CD4-positive, alpha-beta memory T cell (primary cell): ENCODE measurements at regions of chr20 and their contacts with region 1.

Region 1: GRCh38 chr20:57351042-57351783 is at the start of gene RAE1:
- DNase-seq: peak; percentile 90 to 92 (median 91)
- H3K4me3 ChIP-seq: peak within 1 kb of the TSS; percentile 84 to 92
- H3K4me3 Mint-ChIP-seq: peak within 1 kb of the TSS; percentile 87 to 96 (median 92)
- H3K27ac ChIP-seq: peak within 1 kb of the TSS; percentile 91
- H3K27ac Mint-ChIP-seq: peak within 1 kb of the TSS; percentile 87 to 95 (median 91)
- H3K4me1 ChIP-seq: peaks cover 23% of the 10 kb centered on the region
- H3K4me1 Mint-ChIP-seq: peaks cover 11 to 36% (median 23%) of the 10 kb centered on the region in 4 donors
- H3K27me3 ChIP-seq: no peaks in the 10 kb centered on the region
- H3K27me3 Mint-ChIP-seq: peaks cover 0 to 3% of the 10 kb centered on the region in 2 donors
- total RNA-seq, gene RAE1: 30.9 to 33.8 TPM

Region 2: GRCh38 chr20:56551571-56551970 is 799.6 kb before region 1 on chr20:
- CTCF ChIA-PET with region 1: interaction called, 19 read pairs
- POLR2A ChIA-PET with region 1: no interaction called
- intact Hi-C with region 1: no loop called
- DNase-seq: no peak
- H3K4me3 ChIP-seq: no peak overlapping the region
- H3K4me3 Mint-ChIP-seq: no peak overlapping the region
- H3K27ac ChIP-seq: no peak overlapping the region
- H3K27ac Mint-ChIP-seq: peak overlapping the region in 1 of 7 donors; percentile 53
- H3K4me1 ChIP-seq: no peaks in the 10 kb centered on the region
- H3K4me1 Mint-ChIP-seq: no peaks in the 10 kb centered on the region
- H3K27me3 ChIP-seq: no peaks in the 10 kb centered on the region
- H3K27me3 Mint-ChIP-seq: peaks cover 0 to 1% of the 10 kb centered on the region in 2 donors

Region 3: DNA sequence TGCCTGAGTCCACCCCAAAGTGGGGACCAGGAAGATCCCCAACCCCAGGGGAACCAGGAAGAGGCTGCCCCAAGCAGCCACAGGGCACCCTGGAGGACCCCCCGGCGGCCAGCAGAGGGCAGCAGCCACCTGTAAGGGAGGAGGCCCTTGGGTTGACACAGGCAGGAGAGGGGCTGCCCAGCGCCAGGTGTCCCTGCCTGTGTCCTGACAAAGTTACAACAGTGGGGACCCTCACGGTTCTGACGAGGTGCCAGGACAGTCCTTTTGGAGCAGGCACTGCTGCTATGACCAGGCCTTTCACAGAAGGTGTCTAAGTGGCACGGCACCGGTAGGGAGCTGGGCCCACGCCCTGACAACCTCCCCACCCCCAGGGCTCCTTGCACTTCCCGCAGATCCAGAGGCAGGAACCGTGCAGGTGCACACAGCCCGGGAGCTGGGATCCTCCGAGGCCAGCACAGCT is 261.5 kb before region 1 on chr20:
- CTCF ChIA-PET with region 1: interaction called, 13 read pairs
- POLR2A ChIA-PET with region 1: no interaction called
- intact Hi-C with region 1: loop called (anchors 1 kb)
- DNase-seq: peak; percentile 10 to 34 (median 19)
- H3K4me3 ChIP-seq: no peak overlapping the region
- H3K4me3 Mint-ChIP-seq: no peak overlapping the region
- H3K27ac ChIP-seq: no peak overlapping the region
- H3K27ac Mint-ChIP-seq: no peak overlapping the region
- H3K4me1 ChIP-seq: peaks cover 4% of the 10 kb centered on the region
- H3K4me1 Mint-ChIP-seq: peaks cover 6 to 19% (median 10%) of the 10 kb centered on the region in 4 donors
- H3K27me3 ChIP-seq: no peaks in the 10 kb centered on the region
- H3K27me3 Mint-ChIP-seq: peaks cover 6 to 9% of the 10 kb centered on the region in 2 donors

Region 4: DNA sequence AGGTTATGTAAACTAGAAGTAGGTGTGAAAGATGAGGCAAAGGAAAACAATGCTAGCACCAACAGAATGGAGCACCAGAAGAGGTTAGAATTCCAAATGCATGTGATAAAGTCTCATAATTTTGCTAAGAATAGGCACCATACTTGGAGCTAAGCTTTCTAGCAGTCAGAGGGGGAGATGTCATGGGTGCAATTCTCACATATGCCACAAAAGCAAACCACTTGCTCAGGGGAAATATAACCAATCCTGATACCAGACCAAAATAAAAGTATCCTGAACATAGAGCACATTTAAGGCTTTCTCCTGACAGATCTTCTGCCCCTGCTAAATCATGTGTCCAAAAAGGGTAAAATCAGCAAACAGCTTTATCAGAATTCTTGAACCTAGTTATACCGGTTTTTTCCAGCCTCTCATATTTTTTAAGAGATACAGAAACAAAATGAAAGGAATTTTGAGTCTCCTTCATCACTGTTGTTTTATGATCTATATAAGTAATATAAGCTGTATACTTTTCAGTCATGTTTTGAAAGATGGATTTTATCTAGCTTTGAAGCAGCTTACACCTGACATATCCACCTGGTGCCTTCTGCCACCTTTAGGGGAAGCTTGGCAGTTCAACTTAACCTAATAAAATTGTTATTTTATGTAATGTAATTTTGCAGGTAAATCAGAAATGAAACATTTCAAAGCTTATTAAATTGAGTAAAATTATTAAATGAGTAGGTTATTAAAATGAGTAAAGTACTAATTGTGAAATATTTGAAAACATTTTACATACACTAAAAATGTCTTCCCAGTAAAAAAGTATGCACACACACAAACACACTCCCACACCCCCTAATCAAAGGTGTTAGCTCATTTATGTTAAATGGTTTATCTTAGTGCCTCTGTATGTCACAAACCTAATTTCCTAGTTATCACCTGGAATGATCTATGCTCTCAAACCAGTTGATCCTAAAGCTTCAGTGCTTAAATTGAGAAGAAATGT is 18.8 kb before region 1 on chr20:
- CTCF ChIA-PET with region 1: interaction called, 10 read pairs
- POLR2A ChIA-PET with region 1: no interaction called
- intact Hi-C with region 1: no loop called
- DNase-seq: no peak
- H3K4me3 ChIP-seq: no peak overlapping the region
- H3K4me3 Mint-ChIP-seq: no peak overlapping the region
- H3K27ac ChIP-seq: no peak overlapping the region
- H3K27ac Mint-ChIP-seq: no peak overlapping the region
- H3K4me1 ChIP-seq: no peaks in the 10 kb centered on the region
- H3K4me1 Mint-ChIP-seq: no peaks in the 10 kb centered on the region
- H3K27me3 ChIP-seq: peaks cover 14% of the 10 kb centered on the region
- H3K27me3 Mint-ChIP-seq: peaks cover 15 to 34% of the 10 kb centered on the region in 2 donors